ENCODE measurements at regions of chr12 and their contacts with region 1.

Region 1: DNA sequence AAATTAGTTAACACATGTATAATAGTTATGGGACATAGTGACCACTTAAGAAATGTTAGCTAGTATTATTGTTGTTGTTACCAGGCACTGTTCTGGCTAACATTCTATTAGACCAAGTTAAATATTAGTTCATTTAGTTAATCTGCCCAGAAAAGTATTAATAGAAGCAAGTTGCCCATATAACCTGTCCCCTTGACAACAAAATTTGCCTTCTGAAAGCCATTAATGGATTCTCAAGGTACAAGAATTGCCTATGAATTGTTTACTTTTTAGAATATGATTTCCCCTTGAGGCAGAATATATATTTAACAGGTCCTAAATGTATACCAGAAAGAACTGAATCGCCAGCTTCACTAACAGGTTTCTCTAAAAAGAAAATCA is 167.3 kb upstream of the TMCC3 start:
- DNase-seq: no peak
- H3K4me3 ChIP-seq: peak overlapping the region; percentile 65
- H3K27ac ChIP-seq: peak overlapping the region; percentile 100
- H3K4me1 ChIP-seq: peaks cover 63% of the 10 kb centered on the region
- CTCF ChIP-seq: no peak

Region 2: DNA sequence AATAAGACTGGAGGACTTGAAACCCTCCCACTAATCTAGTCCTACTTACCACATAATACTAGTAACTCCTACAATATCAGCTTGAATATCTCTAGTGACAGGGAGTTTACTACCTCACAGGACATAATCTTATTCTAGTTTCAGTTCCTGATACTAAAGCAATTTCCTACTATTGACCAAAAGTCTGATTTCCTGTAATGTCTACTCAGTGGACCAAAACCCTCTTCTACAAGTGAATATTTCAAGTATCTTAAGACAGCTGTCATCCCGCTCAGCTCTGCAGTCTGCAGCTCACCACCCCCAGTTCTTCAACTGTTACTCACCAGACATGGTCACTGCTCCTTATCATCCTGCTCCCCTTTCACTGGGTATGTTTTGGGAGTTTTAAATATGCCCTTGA is 96.5 kb before region 1 on chr12:
- CTCF ChIA-PET with region 1: no interaction called
- POLR2A ChIA-PET with region 1: interaction called, 10 read pairs
- intact Hi-C with region 1: loop called (anchors 5 kb)
- DNase-seq: peak; percentile 87
- H3K4me3 ChIP-seq: peak overlapping the region; percentile 38
- H3K27ac ChIP-seq: peak overlapping the region; percentile 92
- H3K4me1 ChIP-seq: peaks cover 64% of the 10 kb centered on the region
- CTCF ChIP-seq: no peak

Region 3: DNA sequence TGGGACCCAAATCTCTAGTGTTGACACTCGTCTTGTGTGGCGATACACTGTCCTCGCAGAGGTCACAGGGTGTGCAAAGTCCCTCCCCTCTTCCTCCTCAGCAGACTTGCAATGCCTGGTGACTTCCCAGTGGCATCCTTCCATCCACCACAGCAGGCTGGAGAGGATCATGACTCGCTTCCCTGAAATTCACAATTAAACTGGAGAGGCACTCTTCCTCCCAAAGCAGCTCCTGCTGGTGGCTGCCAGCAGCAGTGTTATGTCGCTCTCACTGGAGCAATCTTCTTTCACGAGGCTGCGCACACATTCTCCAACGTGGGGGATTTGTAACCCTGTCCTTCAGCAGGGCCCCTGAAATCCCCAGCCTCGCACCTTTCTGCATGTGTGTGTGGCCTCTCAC is 22.2 kb before region 1 on chr12:
- CTCF ChIA-PET with region 1: no interaction called
- POLR2A ChIA-PET with region 1: no interaction called
- intact Hi-C with region 1: no loop called
- DNase-seq: no peak
- H3K4me3 ChIP-seq: no peak overlapping the region
- H3K27ac ChIP-seq: no peak overlapping the region
- H3K4me1 ChIP-seq: peaks cover 39% of the 10 kb centered on the region
- CTCF ChIP-seq: no peak

Region 4: GRCh38 chr12:94805749-94806529 is 11.7 kb before region 1 on chr12:
- CTCF ChIA-PET with region 1: interaction called, 6 read pairs
- POLR2A ChIA-PET with region 1: interaction called, 29 read pairs
- intact Hi-C with region 1: no loop called
- DNase-seq: peak; percentile 82
- H3K4me3 ChIP-seq: peak overlapping the region; percentile 9
- H3K27ac ChIP-seq: peak overlapping the region; percentile 70
- H3K4me1 ChIP-seq: peaks cover 22% of the 10 kb centered on the region
- CTCF ChIP-seq: no peak

Region 5: GRCh38 chr12:94870511-94870910 is 52.8 kb after region 1 on chr12:
- CTCF ChIA-PET with region 1: interaction called, 30 read pairs
- POLR2A ChIA-PET with region 1: interaction called, 17 read pairs
- intact Hi-C with region 1: loop called (anchors 1 kb)
- DNase-seq: peak; percentile 51
- H3K4me3 ChIP-seq: no peak overlapping the region
- H3K27ac ChIP-seq: peak overlapping the region; percentile 26
- H3K4me1 ChIP-seq: peaks cover 42% of the 10 kb centered on the region
- CTCF ChIP-seq: no peak

Region 6: DNA sequence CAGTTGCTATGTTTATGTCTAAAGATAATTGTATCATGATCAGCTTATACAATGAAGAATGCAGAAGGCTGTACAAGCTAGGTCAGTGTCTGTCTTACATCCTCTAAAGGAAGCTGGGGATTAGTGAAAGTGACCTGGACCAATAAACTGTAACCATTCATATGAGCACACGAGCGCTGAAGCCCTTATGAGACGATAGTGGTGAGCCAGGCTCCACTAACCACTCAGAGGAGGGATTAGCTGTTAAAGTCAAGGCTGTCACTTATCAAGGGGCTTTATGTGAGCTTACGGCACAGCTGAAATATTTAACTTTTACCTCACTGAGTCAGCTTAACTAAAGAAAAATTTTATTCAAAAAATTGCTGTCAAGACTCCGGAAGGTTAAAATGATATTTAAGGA is 155.5 kb after region 1 on chr12:
- CTCF ChIA-PET with region 1: no interaction called
- POLR2A ChIA-PET with region 1: no interaction called
- intact Hi-C with region 1: no loop called
- DNase-seq: peak; percentile 68
- H3K4me3 ChIP-seq: peak overlapping the region; percentile 18
- H3K27ac ChIP-seq: peak overlapping the region; percentile 39
- H3K4me1 ChIP-seq: peaks cover 52% of the 10 kb centered on the region
- CTCF ChIP-seq: no peak

Measured in OCI-LY7 (cell line).